Heart left ventricle (tissue), 16 donors: ENCODE measurements at regions of chr1 and their contacts with region 1.

Region 1: GRCh38 chr1:54488779-54489626 is 59.0 kb upstream of the ACOT11 start:
- DNase-seq: peak; percentile 77 to 92 (median 83)
- ATAC-seq: peak; percentile 42 to 78 (median 75)
- H3K4me3 ChIP-seq: peak overlapping the region; percentile 48 to 88 (median 65)
- H3K27ac ChIP-seq: peak overlapping the region; percentile 78 to 97 (median 92)
- H3K4me1 ChIP-seq: peaks cover 3 to 32% (median 20%) of the 10 kb centered on the region in 12 donors
- H3K27me3 ChIP-seq: peaks cover 0 to 6% (median 0%) of the 10 kb centered on the region in 9 donors
- CTCF ChIP-seq: peak; percentile 93 to 99 (median 98)
- POLR2A ChIP-seq: no peak

Region 2: GRCh38 chr1:54070171-54070837 is 418.7 kb before region 1 on chr1:
- intact Hi-C with region 1: loop called in 8 of 10 experiments (anchors 2 to 5 kb)
- DNase-seq: no peak
- ATAC-seq: peak; percentile 51 to 72 (median 60)
- H3K4me3 ChIP-seq: no peak overlapping the region
- H3K27ac ChIP-seq: no peak overlapping the region
- H3K4me1 ChIP-seq: no peaks in the 10 kb centered on the region
- H3K27me3 ChIP-seq: no peaks in the 10 kb centered on the region
- CTCF ChIP-seq: peak; percentile 53 to 90 (median 78)
- POLR2A ChIP-seq: no peak

Region 3: DNA sequence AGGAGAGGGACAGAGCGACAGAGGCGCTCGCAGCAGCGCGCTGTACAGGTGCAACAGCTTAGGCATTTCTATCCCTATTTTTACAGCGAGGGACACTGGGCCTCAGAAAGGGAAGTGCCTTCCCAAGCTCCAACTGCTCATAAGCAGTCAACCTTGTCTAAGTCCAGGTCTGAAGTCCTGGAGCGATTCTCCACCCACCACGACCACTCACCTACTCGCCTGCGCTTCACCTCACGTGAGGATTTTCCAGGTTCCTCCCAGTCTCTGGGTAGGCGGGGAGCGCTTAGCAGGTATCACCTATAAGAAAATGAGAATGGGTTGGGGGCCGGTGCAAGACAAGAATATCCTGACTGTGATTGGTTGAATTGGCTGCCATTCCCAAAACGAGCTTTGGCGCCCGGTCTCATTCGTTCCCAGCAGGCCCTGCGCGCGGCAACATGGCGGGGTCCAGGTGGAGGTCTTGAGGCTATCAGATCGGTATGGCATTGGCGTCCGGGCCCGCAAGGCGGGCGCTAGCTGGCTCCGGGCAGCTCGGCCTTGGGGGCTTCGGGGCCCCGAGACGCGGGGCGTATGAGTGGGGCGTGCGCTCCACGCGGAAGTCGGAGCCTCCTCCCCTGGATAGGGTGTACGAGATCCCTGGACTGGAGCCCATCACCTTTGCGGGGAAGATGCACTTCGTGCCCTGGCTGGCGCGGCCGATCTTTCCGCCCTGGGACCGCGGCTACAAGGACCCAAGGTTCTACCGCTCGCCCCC is 289.1 kb before region 1 on chr1 and contains the starts of genes CYB5RL and MRPL37:
- intact Hi-C with region 1: loop called in 5 of 10 experiments (anchors 5 to 10 kb)
- DNase-seq: peak; percentile 92 to 96 (median 94)
- ATAC-seq: peak; percentile 98 to 100 (median 99)
- H3K4me3 ChIP-seq: peak within 1 kb of the TSS; percentile 62 to 96 (median 84)
- H3K27ac ChIP-seq: peak within 1 kb of the TSS; percentile 6 to 91 (median 72)
- H3K4me1 ChIP-seq: peaks cover 0 to 30% (median 19%) of the 10 kb centered on the region in 12 donors
- H3K27me3 ChIP-seq: no peaks in the 10 kb centered on the region
- CTCF ChIP-seq: no peak
- POLR2A ChIP-seq: peak in 1 of 2 donors; percentile 65
- total RNA-seq, gene CYB5RL: 2.8 to 7.5 (median 4.4) TPM
- total RNA-seq, gene MRPL37: 75.6 to 122 (median 89.3) TPM

Region 4: GRCh38 chr1:54273092-54273794 is 215.8 kb before region 1 on chr1:
- intact Hi-C with region 1: loop called in 2 of 10 experiments (anchors 1 to 2 kb)
- DNase-seq: peak in 4 of 5 donors; percentile 56 to 91 (median 68)
- ATAC-seq: peak; percentile 64 to 84 (median 76)
- H3K4me3 ChIP-seq: peak overlapping the region in 2 of 12 donors; percentile 7 to 14
- H3K27ac ChIP-seq: peak overlapping the region; percentile 25 to 94 (median 81)
- H3K4me1 ChIP-seq: peaks cover 11 to 86% (median 66%) of the 10 kb centered on the region in 12 donors
- H3K27me3 ChIP-seq: no peaks in the 10 kb centered on the region
- CTCF ChIP-seq: peak in 7 of 12 donors; percentile 15 to 53 (median 44)
- POLR2A ChIP-seq: no peak

Region 5: DNA sequence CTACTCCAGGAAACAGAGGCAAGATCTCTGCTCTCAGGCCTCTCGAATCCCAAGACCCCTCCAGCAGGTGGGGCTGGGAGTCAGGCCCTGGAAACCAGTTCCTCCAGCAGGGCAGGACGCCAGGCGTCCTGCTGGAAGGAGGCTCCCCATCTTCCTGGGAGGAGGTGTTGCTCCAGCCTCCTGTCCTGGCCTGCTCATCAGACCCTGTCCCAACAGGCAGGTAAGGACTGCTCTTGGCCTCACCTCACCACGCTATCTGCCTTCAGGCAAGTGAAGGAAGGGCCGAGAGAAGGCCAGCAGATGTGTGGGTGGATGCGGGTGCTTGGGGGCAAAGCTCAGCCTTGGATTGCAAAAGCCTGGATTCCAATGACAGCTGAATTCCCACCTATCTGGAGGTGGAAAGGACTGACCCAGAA is 165.7 kb before region 1 on chr1:
- intact Hi-C with region 1: loop called in 1 of 10 experiments (anchors 5 kb)
- DNase-seq: no peak
- ATAC-seq: peak in 1 of 4 donors; percentile 16
- H3K4me3 ChIP-seq: no peak overlapping the region
- H3K27ac ChIP-seq: peak overlapping the region in 2 of 12 donors; percentile 12 to 78
- H3K4me1 ChIP-seq: peaks cover 10 to 61% (median 54%) of the 10 kb centered on the region in 12 donors
- H3K27me3 ChIP-seq: no peaks in the 10 kb centered on the region
- CTCF ChIP-seq: peak in 9 of 12 donors; percentile 13 to 42 (median 32)
- POLR2A ChIP-seq: no peak

Region 6: DNA sequence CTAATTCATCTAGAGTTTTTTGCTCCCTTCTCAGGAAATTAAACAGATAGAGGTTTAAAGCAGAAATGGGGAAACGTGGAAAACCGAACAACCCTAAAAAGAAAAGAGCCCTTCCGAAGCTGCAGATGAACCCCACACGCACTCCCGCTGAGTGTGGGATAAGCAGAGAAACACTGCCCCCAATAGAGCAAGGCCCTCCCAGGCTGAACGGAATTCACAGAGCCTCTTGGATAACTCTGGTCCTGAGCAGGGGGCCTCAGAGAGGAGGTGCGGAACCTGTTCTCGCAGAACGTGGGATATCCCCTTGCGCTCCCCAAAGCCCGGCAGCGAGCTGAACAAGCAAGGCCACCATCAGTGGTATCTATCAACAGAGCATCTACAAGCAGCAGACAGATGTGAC is 127.7 kb before region 1 on chr1:
- intact Hi-C with region 1: loop called in 2 of 10 experiments (anchors 2 to 5 kb)
- DNase-seq: peak in 1 of 5 donors; percentile 29
- ATAC-seq: no peak
- H3K4me3 ChIP-seq: no peak overlapping the region
- H3K27ac ChIP-seq: peak overlapping the region in 2 of 12 donors; percentile 4 to 27
- H3K4me1 ChIP-seq: peaks cover under 1 to 79% (median 50%) of the 10 kb centered on the region in 12 donors
- H3K27me3 ChIP-seq: no peaks in the 10 kb centered on the region
- CTCF ChIP-seq: peak in 8 of 12 donors; percentile 7 to 46 (median 28)
- POLR2A ChIP-seq: no peak

Region 7: DNA sequence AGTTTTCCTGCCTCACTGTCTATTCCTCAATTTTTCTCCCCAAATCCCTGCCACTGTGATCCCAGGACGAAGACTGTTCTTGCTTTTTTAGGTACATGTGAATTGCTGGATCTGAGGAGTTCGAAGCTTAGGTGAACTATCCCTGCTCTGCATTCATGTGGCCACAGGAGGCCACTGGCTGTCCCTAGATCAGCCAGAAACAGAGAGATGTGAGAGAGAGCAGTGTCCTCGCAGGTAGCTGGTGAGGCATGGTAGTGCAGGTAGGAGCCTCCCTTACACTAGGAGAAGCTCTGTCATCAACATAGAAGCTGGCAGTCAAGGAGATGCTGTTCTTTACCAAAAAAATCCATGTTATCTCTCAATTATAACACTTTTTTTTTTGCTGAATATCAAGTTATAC is 654.7 kb after region 1 on chr1:
- intact Hi-C with region 1: no loop called
- DNase-seq: no peak
- ATAC-seq: no peak
- H3K4me3 ChIP-seq: no peak overlapping the region
- H3K27ac ChIP-seq: peak overlapping the region in 1 of 12 donors; percentile 1
- H3K4me1 ChIP-seq: peaks cover 0 to 11% (median 0%) of the 10 kb centered on the region in 12 donors
- H3K27me3 ChIP-seq: no peaks in the 10 kb centered on the region
- CTCF ChIP-seq: no peak
- POLR2A ChIP-seq: no peak